Endothelial cell of umbilical vein (primary cell): ENCODE measurements at regions of chr6 and their contacts with region 1.

Region 1: DNA sequence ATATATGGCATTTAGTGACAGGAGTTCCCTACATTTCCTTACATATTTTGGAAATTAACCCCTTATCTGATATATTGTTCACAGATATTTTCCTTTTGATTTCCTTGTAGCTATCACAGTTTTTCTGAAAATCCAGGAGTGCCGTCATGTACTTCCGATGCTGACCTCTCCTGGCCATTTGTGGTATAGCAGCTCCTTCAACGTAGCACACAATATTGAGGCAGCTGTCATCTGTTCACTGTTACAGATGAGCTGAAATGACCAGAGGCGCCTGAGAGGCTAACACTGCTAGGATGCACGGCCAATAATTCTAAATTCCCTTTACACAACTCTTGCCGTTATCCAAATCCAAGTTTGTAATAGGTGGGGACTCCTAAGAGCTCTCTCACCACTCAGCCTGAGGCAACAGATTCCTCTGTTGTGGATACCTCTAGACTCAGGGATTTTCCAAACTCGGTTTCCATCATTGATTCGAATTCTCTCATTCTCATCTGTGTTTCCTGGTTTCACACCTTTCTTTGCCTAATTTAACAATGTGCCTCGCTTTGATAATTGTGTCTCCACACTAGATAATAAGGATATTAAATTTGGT is 53.0 kb downstream of the MMUT start:
- DNase-seq: peak; percentile 78
- H3K4me3 ChIP-seq: no peak overlapping the region
- H3K27ac ChIP-seq: no peak overlapping the region
- H3K4me1 ChIP-seq: no peaks in the 10 kb centered on the region
- H3K27me3 ChIP-seq: no peaks in the 10 kb centered on the region
- CTCF ChIP-seq: peak; percentile 79 to 80
- POLR2A ChIP-seq: no peak

Region 2: DNA sequence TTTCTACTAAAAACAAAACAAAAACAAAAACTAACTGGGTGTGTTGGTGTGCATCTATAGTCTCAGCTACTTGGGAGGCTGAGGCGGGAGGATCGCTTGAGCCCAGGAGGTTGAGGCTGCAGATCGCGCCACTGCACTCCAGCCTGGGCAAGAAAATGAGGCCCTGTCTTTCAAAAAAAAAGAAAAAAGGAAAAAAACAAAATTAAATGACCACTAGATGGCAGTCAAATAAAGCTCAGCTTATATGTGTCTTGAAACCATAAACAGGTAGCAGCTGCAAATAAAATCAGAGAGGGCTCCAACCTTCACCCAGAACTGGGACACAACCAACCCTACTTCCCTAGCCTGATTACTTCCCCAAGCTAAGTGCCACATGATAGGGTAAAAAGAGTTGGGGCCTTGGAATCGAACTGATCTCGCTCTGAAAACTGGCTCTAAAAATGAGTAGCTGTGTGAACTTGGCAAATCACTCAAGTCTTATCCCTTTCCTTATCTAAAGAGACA is 1778.7 kb before region 1 on chr6:
- CTCF ChIA-PET with region 1: interaction called, 10 read pairs
- POLR2A ChIA-PET with region 1: no interaction called
- dilution Hi-C with region 1: no loop called
- intact Hi-C with region 1: no loop called
- DNase-seq: peak; percentile 76
- H3K4me3 ChIP-seq: no peak overlapping the region
- H3K27ac ChIP-seq: no peak overlapping the region
- H3K4me1 ChIP-seq: no peaks in the 10 kb centered on the region
- H3K27me3 ChIP-seq: no peaks in the 10 kb centered on the region
- CTCF ChIP-seq: peak; percentile 37 to 43
- POLR2A ChIP-seq: no peak

Region 3: DNA sequence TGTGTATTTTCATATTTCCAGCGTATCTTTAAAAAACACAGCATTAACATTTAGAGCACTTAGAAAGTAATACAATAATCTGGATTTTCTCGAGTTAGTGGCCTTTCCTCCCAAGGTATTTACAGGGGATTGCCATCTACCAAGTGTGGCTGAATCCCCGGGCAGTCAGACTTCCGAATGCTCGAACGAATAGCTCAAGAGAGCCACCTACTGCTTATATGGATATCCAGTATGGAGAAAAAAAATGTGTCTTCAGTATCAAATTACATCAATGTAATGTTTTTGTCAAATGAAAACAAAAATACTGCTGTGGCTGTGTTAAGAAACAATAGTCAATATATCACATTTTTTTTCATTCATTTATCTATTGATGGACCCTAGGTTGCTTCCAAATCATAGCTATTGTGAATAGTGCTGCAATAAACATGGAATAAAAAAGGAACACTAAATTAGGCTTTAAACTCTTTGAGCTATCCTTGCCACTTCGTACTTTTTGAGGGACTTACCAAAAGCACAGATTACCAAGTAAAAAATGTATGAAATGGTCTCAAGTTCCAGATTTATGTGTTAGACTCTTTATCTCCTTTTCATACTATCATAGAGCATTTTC is 644.6 kb before region 1 on chr6:
- CTCF ChIA-PET with region 1: interaction called, 20 read pairs
- POLR2A ChIA-PET with region 1: no interaction called
- dilution Hi-C with region 1: no loop called
- intact Hi-C with region 1: loop called (anchors 1 kb)
- DNase-seq: peak; percentile 74
- H3K4me3 ChIP-seq: no peak overlapping the region
- H3K27ac ChIP-seq: no peak overlapping the region
- H3K4me1 ChIP-seq: peaks cover 3% of the 10 kb centered on the region
- H3K27me3 ChIP-seq: no peaks in the 10 kb centered on the region
- CTCF ChIP-seq: peak; percentile 49 to 50
- POLR2A ChIP-seq: no peak

Region 4: DNA sequence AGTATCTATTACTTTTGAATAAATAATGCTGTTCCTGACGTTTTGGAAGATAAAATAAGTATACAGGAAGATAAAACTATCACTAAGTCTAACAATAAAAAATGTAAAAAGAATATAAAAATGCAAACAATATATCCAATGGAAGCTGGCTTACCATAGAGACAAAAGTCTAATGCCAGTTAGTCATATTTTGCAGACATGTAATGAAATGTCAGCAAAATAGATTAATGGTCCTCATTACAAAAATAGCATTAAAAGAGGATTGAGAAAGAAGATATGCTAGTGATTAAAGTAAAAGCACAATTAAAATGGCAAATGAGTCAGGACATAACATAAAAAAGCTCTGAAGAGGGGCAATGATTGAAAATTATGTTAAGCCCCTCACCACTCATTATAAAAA is 212.0 kb before region 1 on chr6:
- CTCF ChIA-PET with region 1: interaction called, 42 read pairs
- POLR2A ChIA-PET with region 1: no interaction called
- dilution Hi-C with region 1: no loop called
- intact Hi-C with region 1: no loop called
- DNase-seq: no peak
- H3K4me3 ChIP-seq: no peak overlapping the region
- H3K27ac ChIP-seq: no peak overlapping the region
- H3K4me1 ChIP-seq: no peaks in the 10 kb centered on the region
- H3K27me3 ChIP-seq: peaks cover 0 to 2% of the 10 kb centered on the region in 2 experiments
- CTCF ChIP-seq: no peak
- POLR2A ChIP-seq: no peak

Region 5: DNA sequence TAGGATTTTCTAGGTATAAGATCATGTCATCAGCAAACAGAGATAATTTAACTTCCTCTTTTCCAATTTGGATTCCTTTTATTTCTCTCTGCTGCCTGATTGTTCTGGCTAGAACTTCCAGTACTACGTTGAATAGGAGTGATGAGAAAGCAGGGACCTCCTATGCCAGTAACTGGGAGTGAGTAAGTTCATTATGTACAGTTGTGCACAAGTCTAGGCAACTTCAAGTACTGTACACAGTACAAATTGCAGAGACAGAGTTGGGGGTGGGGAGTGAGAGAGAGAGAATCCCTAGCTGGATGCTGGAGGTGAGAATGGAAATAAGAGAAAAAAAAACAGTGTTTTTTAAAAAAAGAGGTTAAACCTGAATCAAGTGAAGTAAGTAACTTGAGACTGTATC is 157.1 kb before region 1 on chr6:
- CTCF ChIA-PET with region 1: interaction called, 5 read pairs
- POLR2A ChIA-PET with region 1: no interaction called
- dilution Hi-C with region 1: no loop called
- intact Hi-C with region 1: loop called (anchors 10 kb)
- DNase-seq: no peak
- H3K4me3 ChIP-seq: no peak overlapping the region
- H3K27ac ChIP-seq: no peak overlapping the region
- H3K4me1 ChIP-seq: no peaks in the 10 kb centered on the region
- H3K27me3 ChIP-seq: no peaks in the 10 kb centered on the region
- CTCF ChIP-seq: no peak
- POLR2A ChIP-seq: no peak

Region 6: GRCh38 chr6:49305010-49305409 is 105.0 kb before region 1 on chr6:
- CTCF ChIA-PET with region 1: interaction called, 14 read pairs
- POLR2A ChIA-PET with region 1: no interaction called
- dilution Hi-C with region 1: no loop called
- intact Hi-C with region 1: no loop called
- DNase-seq: peak; percentile 33
- H3K4me3 ChIP-seq: peak overlapping the region in 1 of 3 experiments; percentile 33
- H3K27ac ChIP-seq: peak overlapping the region; percentile 20
- H3K4me1 ChIP-seq: peaks cover 14% of the 10 kb centered on the region
- H3K27me3 ChIP-seq: no peaks in the 10 kb centered on the region
- CTCF ChIP-seq: no peak
- POLR2A ChIP-seq: no peak

Region 7: DNA sequence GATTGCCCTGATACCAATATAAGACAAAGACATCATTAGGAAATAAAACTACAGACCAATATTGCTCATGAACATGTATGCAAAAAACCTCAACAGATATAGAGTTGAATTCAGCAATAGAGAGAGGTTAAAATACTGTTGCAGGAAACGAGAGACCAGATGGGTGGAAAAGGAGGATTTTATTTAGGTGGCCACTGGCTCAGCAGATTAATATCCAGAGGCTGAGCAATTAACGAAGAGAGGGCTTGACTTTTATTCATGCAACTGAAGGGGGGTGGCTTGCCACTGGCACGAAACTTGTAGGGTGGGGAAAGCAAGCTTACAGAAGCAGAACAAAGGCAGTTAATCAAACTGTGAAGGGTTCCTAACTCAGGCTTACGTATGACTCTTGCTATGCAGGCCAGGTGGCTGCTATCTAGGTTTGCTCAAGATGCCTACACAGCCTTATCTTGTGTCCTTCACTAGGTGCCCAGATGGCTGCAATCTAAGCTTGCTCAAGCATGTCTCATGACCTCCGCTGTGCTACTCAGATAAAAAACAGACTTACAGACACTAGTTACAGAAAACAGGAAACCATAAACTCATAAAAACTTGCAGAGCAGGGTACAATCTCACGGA is 73.4 kb before region 1 on chr6:
- CTCF ChIA-PET with region 1: interaction called, 11 read pairs
- POLR2A ChIA-PET with region 1: no interaction called
- dilution Hi-C with region 1: no loop called
- intact Hi-C with region 1: no loop called
- DNase-seq: peak; percentile 92
- H3K4me3 ChIP-seq: no peak overlapping the region
- H3K27ac ChIP-seq: peak overlapping the region; percentile 86
- H3K4me1 ChIP-seq: peaks cover 15% of the 10 kb centered on the region
- H3K27me3 ChIP-seq: no peaks in the 10 kb centered on the region
- CTCF ChIP-seq: no peak
- POLR2A ChIP-seq: peak; percentile 64

Region 8: DNA sequence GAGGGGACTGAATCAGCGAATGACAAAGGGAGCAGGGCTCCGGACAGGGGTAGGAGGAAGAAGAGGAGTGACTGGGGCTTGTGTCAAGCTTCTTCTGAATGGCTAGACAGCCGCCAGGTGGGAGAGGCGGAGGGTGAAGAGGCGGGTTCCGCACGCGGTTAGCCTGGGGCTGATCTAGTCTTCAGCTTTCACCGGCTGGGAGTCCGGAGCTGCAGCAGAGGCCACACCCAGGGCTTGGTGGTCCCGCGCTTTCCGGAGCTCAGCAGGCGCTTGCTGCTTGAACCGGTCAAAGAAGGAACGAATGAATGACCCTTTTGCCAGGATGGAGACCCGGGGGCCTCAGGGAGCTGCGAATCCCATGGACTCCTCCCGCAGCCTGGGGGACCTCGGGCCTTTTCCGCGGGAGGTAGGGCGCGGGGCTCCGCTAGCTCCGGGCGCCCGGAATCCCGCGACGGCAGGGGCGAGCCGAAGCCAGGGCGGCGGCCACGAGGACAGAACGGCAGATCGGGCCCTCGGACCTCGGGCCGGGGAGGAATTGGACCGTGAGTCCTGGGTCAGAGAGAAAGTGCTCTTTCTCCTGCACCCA is 140.5 kb after region 1 on chr6 and contains the start of gene C6orf141:
- CTCF ChIA-PET with region 1: no interaction called
- POLR2A ChIA-PET with region 1: no interaction called
- dilution Hi-C with region 1: no loop called
- intact Hi-C with region 1: no loop called
- DNase-seq: peak; percentile 24
- H3K4me3 ChIP-seq: peak within 1 kb of the TSS; percentile 51 to 71 (median 59)
- H3K27ac ChIP-seq: peak within 1 kb of the TSS; percentile 11
- H3K4me1 ChIP-seq: peaks cover 24% of the 10 kb centered on the region
- H3K27me3 ChIP-seq: peaks cover 0 to 3% of the 10 kb centered on the region in 2 experiments
- CTCF ChIP-seq: no peak
- POLR2A ChIP-seq: no peak
- total RNA-seq, gene C6orf141: 13.7 and 15.5 TPM in 2 replicates

Region 9: GRCh38 chr6:49939993-49940498 is 530.0 kb after region 1 on chr6:
- CTCF ChIA-PET with region 1: no interaction called
- POLR2A ChIA-PET with region 1: no interaction called
- dilution Hi-C with region 1: no loop called
- intact Hi-C with region 1: no loop called
- DNase-seq: no peak
- H3K4me3 ChIP-seq: no peak overlapping the region
- H3K27ac ChIP-seq: no peak overlapping the region
- H3K4me1 ChIP-seq: no peaks in the 10 kb centered on the region
- H3K27me3 ChIP-seq: no peaks in the 10 kb centered on the region
- CTCF ChIP-seq: no peak
- POLR2A ChIP-seq: no peak